Endothelial cell of umbilical vein (primary cell): ENCODE measurements at regions of chr21 and their contacts with region 1.

Region 1: GRCh38 chr21:39048064-39048463 is 135.2 kb downstream of the PSMG1 start:
- DNase-seq: peak; percentile 19
- H3K4me3 ChIP-seq: no peak overlapping the region
- H3K27ac ChIP-seq: no peak overlapping the region
- H3K4me1 ChIP-seq: peaks cover 3% of the 10 kb centered on the region
- H3K27me3 ChIP-seq: no peaks in the 10 kb centered on the region
- CTCF ChIP-seq: no peak
- POLR2A ChIP-seq: no peak

Region 2: GRCh38 chr21:38956856-38957571 is 91.0 kb before region 1 on chr21:
- CTCF ChIA-PET with region 1: no interaction called
- POLR2A ChIA-PET with region 1: no interaction called
- dilution Hi-C with region 1: no loop called
- intact Hi-C with region 1: no loop called
- DNase-seq: peak; percentile 7
- H3K4me3 ChIP-seq: no peak overlapping the region
- H3K27ac ChIP-seq: no peak overlapping the region
- H3K4me1 ChIP-seq: no peaks in the 10 kb centered on the region
- H3K27me3 ChIP-seq: peaks cover 0 to 3% of the 10 kb centered on the region in 2 experiments
- CTCF ChIP-seq: no peak
- POLR2A ChIP-seq: no peak

Region 3: GRCh38 chr21:39066829-39067780 is 19.0 kb after region 1 on chr21:
- CTCF ChIA-PET with region 1: no interaction called
- POLR2A ChIA-PET with region 1: no interaction called
- dilution Hi-C with region 1: no loop called
- intact Hi-C with region 1: loop called (anchors 2 kb)
- DNase-seq: peak; percentile 83
- H3K4me3 ChIP-seq: no peak overlapping the region
- H3K27ac ChIP-seq: peak overlapping the region; percentile 6
- H3K4me1 ChIP-seq: peaks cover 26% of the 10 kb centered on the region
- H3K27me3 ChIP-seq: peaks cover 0 to 4% of the 10 kb centered on the region in 2 experiments
- CTCF ChIP-seq: no peak
- POLR2A ChIP-seq: no peak